HepG2 (cell line): ENCODE measurements at regions of chr20 and their contacts with region 1.

Region 1: GRCh38 chr20:34473262-34473883 is 42.8 kb upstream of the DYNLRB1 start:
- DNase-seq: peak; percentile 72
- ATAC-seq: peak; percentile 92
- H3K4me3 ChIP-seq: no peak overlapping the region
- H3K27ac ChIP-seq: no peak overlapping the region
- H3K4me1 ChIP-seq: peaks cover 10% of the 10 kb centered on the region
- H3K27me3 ChIP-seq: no peaks in the 10 kb centered on the region
- CTCF ChIP-seq: peak; percentile 94
- EP300 ChIP-seq: no peak
- POLR2A ChIP-seq: no peak
- RAD21 ChIP-seq: peak; percentile 85

Region 2: DNA sequence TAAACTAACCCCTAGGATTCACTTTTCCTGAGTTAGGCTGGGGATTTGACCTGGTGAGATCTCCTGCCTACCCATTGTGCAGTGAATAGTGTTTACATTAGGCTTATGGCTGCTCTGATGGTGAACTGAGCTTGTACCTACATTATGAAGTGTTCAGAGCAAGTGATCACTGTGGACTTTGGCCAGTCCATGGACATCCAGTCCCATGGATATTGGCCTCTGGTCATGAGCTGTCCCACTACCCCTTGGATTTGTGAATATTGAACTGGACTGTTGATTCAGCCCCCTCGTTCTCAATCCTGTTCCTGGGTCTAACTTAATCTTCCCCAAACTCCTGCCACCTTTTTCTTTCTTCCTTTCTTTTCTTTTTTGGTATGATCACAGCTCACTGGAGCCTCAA is 218.4 kb before region 1 on chr20:
- CTCF ChIA-PET with region 1: interaction called, 4 read pairs
- POLR2A ChIA-PET with region 1: no interaction called
- in situ Hi-C with region 1: no loop called
- intact Hi-C with region 1: loop called (anchors 5 kb)
- DNase-seq: peak; percentile 78
- ATAC-seq: peak; percentile 76
- H3K4me3 ChIP-seq: 0 out of 6 replicates have a peak overlapping the region, but pooled peaks of 1 of the 3 experiments have one; percentile 1
- H3K27ac ChIP-seq: peak overlapping the region; percentile 31
- H3K4me1 ChIP-seq: peaks cover 22% of the 10 kb centered on the region
- H3K27me3 ChIP-seq: no peaks in the 10 kb centered on the region
- CTCF ChIP-seq: peak; percentile 28
- EP300 ChIP-seq: no peak
- POLR2A ChIP-seq: no peak
- RAD21 ChIP-seq: peak; percentile 39; the same call in 1 of the 2 replicates

Region 3: DNA sequence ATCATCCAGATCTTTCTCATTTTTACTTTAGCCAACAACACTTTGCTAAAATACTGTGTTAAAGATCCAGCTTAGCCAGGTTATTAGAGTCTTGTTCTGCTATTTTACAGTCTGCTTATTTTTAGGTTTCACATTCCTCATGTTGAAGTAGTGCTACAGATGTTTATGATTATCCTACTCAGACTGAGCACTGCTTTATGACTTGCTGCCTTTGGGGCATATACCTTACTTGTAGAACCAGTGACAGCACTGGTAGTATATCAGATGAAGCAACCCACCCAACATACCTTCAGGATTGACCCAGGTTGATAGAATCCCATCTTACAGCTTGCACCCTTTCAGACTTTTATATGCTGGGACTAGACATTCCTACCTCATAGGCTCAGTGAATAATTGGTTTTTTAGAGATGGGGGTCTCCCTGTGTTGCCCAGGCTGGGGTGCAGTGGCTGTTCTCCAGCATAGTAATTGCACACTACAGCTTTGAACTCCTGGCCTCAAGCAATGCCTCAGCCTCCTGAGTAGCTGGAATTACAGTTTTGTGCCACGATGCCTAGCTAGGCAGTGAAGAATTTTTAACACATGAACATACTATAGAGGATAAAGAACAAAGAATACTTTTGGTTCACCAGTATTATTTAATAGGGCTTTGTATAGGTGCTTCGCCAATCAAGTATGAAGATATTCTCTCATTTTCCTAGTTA is 20.9 kb before region 1 on chr20:
- CTCF ChIA-PET with region 1: no interaction called
- POLR2A ChIA-PET with region 1: no interaction called
- in situ Hi-C with region 1: no loop called
- intact Hi-C with region 1: no loop called
- DNase-seq: no peak
- ATAC-seq: peak; percentile 43; the same call in 2 of the 3 replicates
- H3K4me3 ChIP-seq: no peak overlapping the region
- H3K27ac ChIP-seq: no peak overlapping the region
- H3K4me1 ChIP-seq: no peaks in the 10 kb centered on the region
- H3K27me3 ChIP-seq: no peaks in the 10 kb centered on the region
- CTCF ChIP-seq: no peak
- EP300 ChIP-seq: no peak
- POLR2A ChIP-seq: no peak
- RAD21 ChIP-seq: no peak